ENCODE measurements at regions of chr7 and their contacts with region 1.

Region 1: DNA sequence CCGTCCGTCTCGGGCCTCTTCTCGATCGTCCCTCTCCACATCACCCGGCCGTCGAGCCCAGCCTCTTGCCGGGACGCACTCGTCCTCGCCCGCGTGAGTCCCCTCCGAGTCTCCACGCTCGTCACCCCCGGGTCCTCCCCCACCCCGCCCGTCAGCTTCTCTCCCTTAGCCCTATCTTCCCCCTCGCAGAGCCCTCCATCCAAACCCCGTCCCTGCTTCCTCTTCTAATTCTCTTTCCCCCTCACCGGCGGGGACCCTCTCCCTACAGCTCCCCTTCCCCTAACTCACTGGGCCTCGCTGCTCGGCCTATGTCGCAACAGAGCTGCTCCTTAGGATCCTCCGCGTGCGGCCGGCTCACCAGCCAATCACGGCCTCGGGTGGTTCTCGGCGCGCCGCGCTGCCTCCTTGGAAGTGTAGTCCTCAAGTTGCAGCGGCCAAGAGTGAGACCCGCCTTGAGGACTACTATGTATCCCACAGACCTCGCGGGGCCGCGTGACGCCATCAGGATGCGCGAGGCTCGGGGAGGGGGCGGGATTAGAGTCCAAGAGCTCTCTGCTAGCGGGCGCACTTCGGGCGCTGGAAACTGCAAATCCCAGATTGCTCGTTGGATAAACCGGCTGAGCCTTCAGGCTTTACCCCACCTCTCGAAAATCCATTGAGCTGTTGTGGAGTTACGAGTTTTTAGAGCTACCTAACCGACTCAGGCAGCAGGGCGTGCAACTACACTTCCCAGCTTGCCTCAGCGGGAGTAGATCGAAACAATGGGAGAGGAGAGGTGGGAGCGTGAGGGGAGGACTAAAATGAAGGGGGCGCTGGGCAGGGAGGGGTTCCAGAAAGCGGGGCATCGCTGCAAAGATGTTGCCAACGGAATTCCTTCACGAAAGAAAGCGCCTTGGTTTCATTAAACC is at the start of gene ABCF2:
- DNase-seq: peak; percentile 100
- ATAC-seq: peak; percentile 98
- H3K4me3 Mint-ChIP-seq: peak within 1 kb of the TSS; percentile 95
- H3K27ac Mint-ChIP-seq: peak within 1 kb of the TSS; percentile 100
- H3K4me1 Mint-ChIP-seq: peaks cover 30% of the 10 kb centered on the region
- H3K27me3 Mint-ChIP-seq: no peaks in the 10 kb centered on the region
- CTCF ChIP-seq: no peak
- total RNA-seq, gene ABCF2: 41.3 to 43.7 TPM (median 43.5 TPM) in 3 replicates

Region 2: GRCh38 chr7:151181011-151181431 is 46.1 kb before region 1 on chr7:
- CTCF ChIA-PET with region 1: no interaction called
- POLR2A ChIA-PET with region 1: no interaction called
- DNase-seq: no peak
- ATAC-seq: no peak
- H3K4me3 Mint-ChIP-seq: no peak overlapping the region
- H3K27ac Mint-ChIP-seq: no peak overlapping the region
- H3K4me1 Mint-ChIP-seq: peaks cover 3% of the 10 kb centered on the region; the same call in 1 of the 2 replicates
- H3K27me3 Mint-ChIP-seq: peaks cover 19% of the 10 kb centered on the region
- CTCF ChIP-seq: no peak

Region 3: DNA sequence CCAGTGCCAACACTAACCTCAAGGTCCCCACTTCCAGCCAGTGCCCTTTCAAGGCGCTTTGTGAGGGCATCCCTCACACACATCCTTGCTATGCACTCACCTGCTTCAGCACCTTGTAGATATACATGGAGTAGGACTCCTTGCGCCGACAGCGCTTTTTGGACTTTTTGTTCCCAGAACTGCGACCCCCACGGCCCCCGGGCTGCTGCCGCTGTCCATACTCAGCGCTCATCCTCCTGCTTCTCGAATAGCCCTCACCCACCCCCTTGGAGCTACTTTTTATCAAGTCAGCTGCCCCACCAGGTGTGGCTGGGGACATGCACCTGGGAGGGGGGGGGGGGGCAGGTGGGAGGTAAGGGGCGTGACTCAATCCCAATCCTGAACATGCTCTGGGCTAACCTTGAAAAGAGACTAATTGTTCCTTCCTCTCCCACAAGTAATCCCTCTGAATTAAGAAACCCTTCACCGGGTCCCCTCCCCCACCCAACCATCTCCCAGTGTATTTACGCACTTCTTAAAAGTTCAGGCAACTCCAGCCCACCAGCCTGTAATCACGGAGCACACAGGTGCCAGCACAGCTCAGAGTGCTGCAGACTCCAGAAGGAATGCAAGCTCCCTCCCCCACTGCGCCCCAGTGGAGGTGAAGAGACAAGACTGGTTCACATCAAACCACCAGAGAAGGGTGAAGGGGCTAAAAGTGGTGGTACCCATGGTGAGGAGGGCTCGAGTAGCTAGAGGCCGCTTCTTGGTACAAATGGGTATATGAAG is 16.9 kb before region 1 on chr7 and contains the start of gene H2BK1:
- CTCF ChIA-PET with region 1: interaction called, 17 read pairs
- POLR2A ChIA-PET with region 1: interaction called, 4 read pairs
- DNase-seq: peak; percentile 53
- ATAC-seq: peak; percentile 66
- H3K4me3 Mint-ChIP-seq: no peak within 1 kb of the TSS
- H3K27ac Mint-ChIP-seq: peak within 1 kb of the TSS; percentile 69; the same call in 1 of the 2 replicates
- H3K4me1 Mint-ChIP-seq: peaks cover 12% of the 10 kb centered on the region
- H3K27me3 Mint-ChIP-seq: no peaks in the 10 kb centered on the region; the same call in 1 of the 2 replicates
- CTCF ChIP-seq: no peak
- total RNA-seq, gene H2BK1: 0.87 TPM in 1 of 3 replicates, not detected in the others

Measured in WTC11 (cell line).